ENCODE measurements at regions of chr7 and their contacts with region 1.

Region 1: GRCh38 chr7:117014673-117015133 is 61.4 kb downstream of the ST7 start:
- DNase-seq: no peak
- H3K4me3 Mint-ChIP-seq: no peak overlapping the region
- H3K27ac Mint-ChIP-seq: no peak overlapping the region
- H3K4me1 Mint-ChIP-seq: peaks cover 40% of the 10 kb centered on the region
- H3K27me3 Mint-ChIP-seq: peaks cover 25% of the 10 kb centered on the region

Region 2: GRCh38 chr7:116929914-116930913 is 84.5 kb before region 1 on chr7:
- intact Hi-C with region 1: loop called (anchors 2 kb)
- DNase-seq: peak; percentile 58
- H3K4me3 Mint-ChIP-seq: no peak overlapping the region
- H3K27ac Mint-ChIP-seq: no peak overlapping the region
- H3K4me1 Mint-ChIP-seq: peaks cover 7% of the 10 kb centered on the region
- H3K27me3 Mint-ChIP-seq: peaks cover 20% of the 10 kb centered on the region

Region 3: DNA sequence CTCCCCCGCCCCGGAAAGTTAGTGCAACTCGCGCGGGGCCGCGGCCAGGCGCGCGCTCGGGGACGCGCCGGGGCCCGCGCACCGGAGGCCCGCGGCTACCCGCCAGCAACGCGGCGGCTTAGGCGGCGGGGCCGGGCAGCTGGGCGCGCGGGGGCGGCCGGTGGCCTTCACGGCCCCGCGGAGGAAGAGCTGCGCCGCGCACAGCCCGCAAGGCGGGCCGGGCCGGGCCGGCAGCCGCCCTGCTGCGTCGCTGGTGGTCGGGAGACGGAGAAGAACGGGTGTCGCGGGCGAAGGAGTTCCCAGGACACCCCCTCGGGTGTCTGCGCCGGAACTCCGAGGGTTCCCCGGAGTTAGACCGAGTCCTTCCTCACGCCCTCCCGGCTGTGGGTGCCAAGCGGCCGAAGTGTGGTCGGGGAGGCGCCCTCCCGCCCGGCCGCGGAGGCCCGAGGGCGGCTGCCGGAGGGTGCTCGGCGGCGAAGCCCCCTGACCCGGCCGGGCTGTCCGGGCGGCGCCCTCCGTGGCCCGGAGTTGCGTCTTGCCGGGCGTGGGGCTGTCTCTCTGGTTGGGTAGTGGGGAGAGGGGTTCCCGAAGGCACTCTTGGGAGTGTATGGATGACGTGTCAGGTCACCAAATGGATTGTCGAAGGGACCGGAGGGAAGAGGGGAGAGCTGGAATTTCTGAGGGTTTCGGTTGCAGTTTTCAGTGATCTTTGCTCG is 60.8 kb before region 1 on chr7:
- intact Hi-C with region 1: loop called (anchors 1 kb)
- DNase-seq: no peak
- H3K4me3 Mint-ChIP-seq: peak overlapping the region; percentile 93
- H3K27ac Mint-ChIP-seq: peak overlapping the region; percentile 87
- H3K4me1 Mint-ChIP-seq: peaks cover 12% of the 10 kb centered on the region
- H3K27me3 Mint-ChIP-seq: peaks cover 12% of the 10 kb centered on the region

Region 4: GRCh38 chr7:116984917-116985316 is 29.8 kb before region 1 on chr7:
- intact Hi-C with region 1: loop called (anchors 1 kb)
- DNase-seq: no peak
- H3K4me3 Mint-ChIP-seq: no peak overlapping the region
- H3K27ac Mint-ChIP-seq: no peak overlapping the region
- H3K4me1 Mint-ChIP-seq: no peaks in the 10 kb centered on the region
- H3K27me3 Mint-ChIP-seq: no peaks in the 10 kb centered on the region

Region 5: DNA sequence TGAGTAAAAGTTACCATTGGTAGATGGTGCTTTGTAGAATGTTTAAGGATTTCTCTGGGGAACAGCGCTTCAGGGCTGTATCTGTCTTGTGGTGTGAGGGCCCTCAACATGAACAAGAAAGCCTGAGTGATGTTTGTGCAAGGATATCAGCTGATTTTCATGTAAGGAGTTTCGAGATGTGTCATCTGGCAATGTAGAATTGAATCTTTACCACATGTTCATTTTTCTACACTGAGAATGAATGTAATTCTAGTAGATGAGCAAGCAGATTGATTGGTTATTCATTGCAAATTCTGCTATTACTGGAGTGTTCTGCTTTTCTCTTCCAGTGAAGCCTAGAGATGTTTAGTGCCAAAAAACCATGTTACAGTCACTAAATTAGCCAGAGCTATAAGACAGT is 26.3 kb after region 1 on chr7:
- intact Hi-C with region 1: loop called (anchors 1 kb)
- DNase-seq: no peak
- H3K4me3 Mint-ChIP-seq: no peak overlapping the region
- H3K27ac Mint-ChIP-seq: no peak overlapping the region
- H3K4me1 Mint-ChIP-seq: peaks cover 10% of the 10 kb centered on the region
- H3K27me3 Mint-ChIP-seq: peaks cover 13% of the 10 kb centered on the region

Region 6: GRCh38 chr7:117110480-117111337 is 96.0 kb after region 1 on chr7:
- intact Hi-C with region 1: loop called (anchors 1 kb)
- DNase-seq: peak; percentile 30
- H3K4me3 Mint-ChIP-seq: peak overlapping the region; percentile 37
- H3K27ac Mint-ChIP-seq: peak overlapping the region; percentile 15
- H3K4me1 Mint-ChIP-seq: peaks cover 21% of the 10 kb centered on the region
- H3K27me3 Mint-ChIP-seq: peaks cover 26% of the 10 kb centered on the region

Region 7: DNA sequence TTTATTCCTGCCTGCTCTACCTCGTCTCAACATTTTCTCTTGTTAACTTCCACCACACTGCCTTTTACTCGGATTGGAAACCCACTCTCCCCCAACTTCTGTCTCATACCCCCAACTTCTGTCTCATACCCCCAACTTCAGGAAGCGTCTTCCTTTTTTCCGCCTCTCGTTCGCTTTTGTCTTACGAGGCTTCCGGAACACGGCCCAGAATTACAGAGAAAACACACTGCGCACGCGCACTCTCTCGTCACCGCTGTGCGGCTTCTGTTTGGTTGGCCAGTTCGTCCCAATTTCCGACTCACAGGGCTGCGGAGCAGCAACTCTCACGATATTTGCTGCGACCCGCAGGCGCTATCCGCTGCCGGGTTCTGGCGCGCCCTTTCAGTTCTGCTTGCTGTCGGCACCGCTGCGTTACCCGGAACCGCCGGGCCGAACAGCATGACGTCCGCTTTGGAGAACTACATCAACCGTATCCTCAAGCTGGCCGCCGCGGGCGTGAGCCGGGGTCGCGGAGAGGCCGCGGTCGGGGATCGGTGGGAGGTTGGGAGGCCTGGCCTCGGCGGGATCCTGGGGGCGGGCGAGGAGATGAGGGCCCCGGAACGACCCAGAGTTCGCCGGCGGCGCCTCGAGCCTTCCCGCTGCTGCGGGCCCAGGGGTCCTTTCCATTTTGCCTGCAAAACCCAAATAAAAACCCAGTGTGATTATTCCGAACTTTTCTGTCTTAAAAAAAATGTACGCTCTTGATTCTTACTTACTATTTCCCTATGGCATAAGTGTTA is 1169.3 kb after region 1 on chr7 and contains the start of gene LSM8:
- intact Hi-C with region 1: loop called (anchors 2 kb)
- DNase-seq: peak; percentile 97
- H3K4me3 Mint-ChIP-seq: peak within 1 kb of the TSS; percentile 97
- H3K27ac Mint-ChIP-seq: peak within 1 kb of the TSS; percentile 99
- H3K4me1 Mint-ChIP-seq: peaks cover 40% of the 10 kb centered on the region
- H3K27me3 Mint-ChIP-seq: no peaks in the 10 kb centered on the region
- total RNA-seq, gene LSM8: 45.9 and 46.7 TPM in 2 replicates

Measured in activated T-helper 1 cell treated with anti-CD3 and anti-CD28 coated beads, Interleukin-12 subunit alpha, Interleukin-12 subunit beta, Interleukin-2, Interleukin-4 antibody, amounts not matched to agents 30 ng/mL and 10 ng/mL and 1 ng/mL, durations not matched to agents 14 hours and 24 hours and 36 hours (primary cell).